Activated CD4-positive, alpha-beta memory T cell treated with anti-CD3 and anti-CD28 coated beads for 36 hours (primary cell): ENCODE measurements at regions of chr1 and their contacts with region 1.

Region 1: GRCh38 chr1:88237058-88237457 is 447.0 kb upstream of the PKN2 start:
- DNase-seq: no peak
- H3K4me3 Mint-ChIP-seq: no peak overlapping the region
- H3K27ac Mint-ChIP-seq: no peak overlapping the region
- H3K4me1 Mint-ChIP-seq: no peaks in the 10 kb centered on the region
- H3K27me3 Mint-ChIP-seq: no peaks in the 10 kb centered on the region

Region 2: GRCh38 chr1:87575528-87575927 is 661.5 kb before region 1 on chr1:
- CTCF ChIA-PET with region 1: no interaction called
- POLR2A ChIA-PET with region 1: no interaction called
- intact Hi-C with region 1: no loop called
- DNase-seq: no peak
- H3K4me3 Mint-ChIP-seq: no peak overlapping the region
- H3K27ac Mint-ChIP-seq: no peak overlapping the region
- H3K4me1 Mint-ChIP-seq: peaks cover 5% of the 10 kb centered on the region
- H3K27me3 Mint-ChIP-seq: peaks cover 5% of the 10 kb centered on the region

Region 3: DNA sequence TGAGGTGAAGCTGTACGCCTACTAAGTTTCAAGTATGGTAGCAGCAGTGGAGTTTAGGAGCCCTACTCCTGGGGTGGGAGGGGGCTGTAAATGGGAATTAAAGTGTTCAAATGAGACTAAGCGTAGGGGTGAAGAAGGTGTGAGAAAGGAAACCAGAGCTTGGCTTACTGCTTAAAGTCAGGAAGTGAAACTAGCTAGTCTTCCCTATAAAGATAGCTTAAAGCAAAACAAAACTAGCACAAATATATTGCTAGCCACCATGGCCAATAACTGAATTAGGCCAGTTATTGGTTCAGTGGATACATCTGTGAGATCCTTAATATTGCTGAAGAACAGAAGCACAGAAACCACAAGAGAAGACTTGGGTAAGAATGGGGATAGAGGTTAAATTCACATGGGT is 45.1 kb before region 1 on chr1:
- CTCF ChIA-PET with region 1: no interaction called
- POLR2A ChIA-PET with region 1: no interaction called
- intact Hi-C with region 1: loop called (anchors 1 kb)
- DNase-seq: no peak
- H3K4me3 Mint-ChIP-seq: no peak overlapping the region
- H3K27ac Mint-ChIP-seq: no peak overlapping the region
- H3K4me1 Mint-ChIP-seq: peaks cover 3% of the 10 kb centered on the region
- H3K27me3 Mint-ChIP-seq: no peaks in the 10 kb centered on the region

Region 4: DNA sequence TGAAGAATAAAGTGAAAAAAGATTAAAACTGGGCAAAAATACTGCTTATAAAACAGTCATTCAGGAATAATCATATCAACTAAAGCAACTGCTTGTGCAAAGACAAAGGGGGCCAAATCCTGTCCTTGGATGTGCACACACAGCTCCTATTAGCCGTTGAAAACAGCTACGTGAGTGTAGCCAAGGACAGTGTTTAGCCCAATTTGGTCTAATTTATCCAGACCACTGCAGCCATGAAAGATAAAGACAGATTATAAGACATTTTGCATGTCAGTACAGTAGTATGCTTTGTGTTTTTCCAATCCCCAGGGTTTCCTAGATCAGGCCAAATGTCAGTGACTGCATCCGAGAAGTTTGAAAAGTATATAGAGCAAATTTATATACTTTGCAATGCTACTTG is 300.7 kb after region 1 on chr1:
- CTCF ChIA-PET with region 1: no interaction called
- POLR2A ChIA-PET with region 1: no interaction called
- intact Hi-C with region 1: no loop called
- DNase-seq: no peak
- H3K4me3 Mint-ChIP-seq: no peak overlapping the region
- H3K27ac Mint-ChIP-seq: no peak overlapping the region
- H3K4me1 Mint-ChIP-seq: no peaks in the 10 kb centered on the region
- H3K27me3 Mint-ChIP-seq: peaks cover 4% of the 10 kb centered on the region